ENCODE measurements at regions of chr20 and their contacts with region 1.

Region 1: GRCh38 chr20:51624157-51624731 is 81.7 kb upstream of the NFATC2 start:
- DNase-seq: peak; percentile 42
- H3K4me3 ChIP-seq: no peak overlapping the region
- H3K27ac ChIP-seq: no peak overlapping the region
- H3K4me1 ChIP-seq: no peaks in the 10 kb centered on the region
- H3K27me3 ChIP-seq: peaks cover 2% of the 10 kb centered on the region
- CTCF ChIP-seq: peak; percentile 50 to 70

Region 2: DNA sequence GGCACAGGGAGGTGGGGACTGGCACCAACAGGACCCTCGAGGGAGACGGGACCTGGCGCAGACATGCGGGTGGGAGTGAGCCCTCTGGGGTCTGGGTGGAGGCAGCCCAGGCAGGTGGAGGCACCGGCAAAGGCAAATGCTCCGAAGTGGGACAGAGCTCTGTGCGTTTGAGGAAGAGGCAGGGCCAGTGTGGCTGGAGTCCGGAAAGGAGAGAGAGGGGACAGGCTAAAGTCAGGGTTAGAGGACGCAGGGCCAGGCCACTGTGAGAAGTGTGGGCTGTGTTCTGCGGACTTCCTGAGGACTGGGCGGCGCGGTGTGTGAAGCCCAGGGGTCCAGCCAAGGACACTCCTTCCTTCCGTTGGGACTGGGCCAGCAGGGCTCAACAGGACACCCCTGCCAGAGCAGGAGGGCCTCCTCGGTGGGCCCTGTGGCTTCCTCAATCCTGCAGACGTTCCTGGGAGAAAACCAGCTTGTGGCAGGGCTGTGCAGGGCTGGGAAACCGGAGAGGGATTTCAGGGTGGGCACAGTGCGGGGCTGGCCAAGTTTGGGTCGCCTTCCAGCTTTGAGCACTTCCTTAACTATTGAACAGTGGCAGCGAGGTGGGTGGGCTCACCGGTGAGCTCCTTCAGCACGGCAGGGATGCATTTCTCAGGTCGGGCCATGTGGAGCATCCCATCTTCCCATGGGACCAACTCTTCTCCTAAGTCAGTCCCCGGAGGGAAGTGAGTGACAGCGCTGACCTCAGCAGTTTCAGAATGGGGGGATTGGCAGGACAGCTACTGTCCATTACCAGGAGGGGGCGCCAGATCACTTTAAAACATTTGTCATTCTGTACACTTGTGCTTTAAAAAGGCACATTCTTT is 643.2 kb before region 1 on chr20:
- CTCF ChIA-PET with region 1: no interaction called
- dilution Hi-C with region 1: no loop called
- in situ Hi-C with region 1: loop called in 1 of 2 experiments (anchors 10 kb)
- intact Hi-C with region 1: loop called (anchors 1 kb)
- DNase-seq: peak; percentile 52
- H3K4me3 ChIP-seq: no peak overlapping the region
- H3K27ac ChIP-seq: peak overlapping the region; percentile 84
- H3K4me1 ChIP-seq: peaks cover 34% of the 10 kb centered on the region
- H3K27me3 ChIP-seq: no peaks in the 10 kb centered on the region
- CTCF ChIP-seq: peak; percentile 70 to 91

Region 3: GRCh38 chr20:50992733-50993457 is 631.3 kb before region 1 on chr20:
- CTCF ChIA-PET with region 1: interaction called, 13 read pairs
- dilution Hi-C with region 1: no loop called
- in situ Hi-C with region 1: loop called in 1 of 2 experiments (anchors 10 kb)
- intact Hi-C with region 1: no loop called
- DNase-seq: peak; percentile 79
- H3K4me3 ChIP-seq: no peak overlapping the region
- H3K27ac ChIP-seq: peak overlapping the region; percentile 60
- H3K4me1 ChIP-seq: peaks cover 29% of the 10 kb centered on the region
- H3K27me3 ChIP-seq: no peaks in the 10 kb centered on the region
- CTCF ChIP-seq: peak; percentile 79 to 81

Region 4: DNA sequence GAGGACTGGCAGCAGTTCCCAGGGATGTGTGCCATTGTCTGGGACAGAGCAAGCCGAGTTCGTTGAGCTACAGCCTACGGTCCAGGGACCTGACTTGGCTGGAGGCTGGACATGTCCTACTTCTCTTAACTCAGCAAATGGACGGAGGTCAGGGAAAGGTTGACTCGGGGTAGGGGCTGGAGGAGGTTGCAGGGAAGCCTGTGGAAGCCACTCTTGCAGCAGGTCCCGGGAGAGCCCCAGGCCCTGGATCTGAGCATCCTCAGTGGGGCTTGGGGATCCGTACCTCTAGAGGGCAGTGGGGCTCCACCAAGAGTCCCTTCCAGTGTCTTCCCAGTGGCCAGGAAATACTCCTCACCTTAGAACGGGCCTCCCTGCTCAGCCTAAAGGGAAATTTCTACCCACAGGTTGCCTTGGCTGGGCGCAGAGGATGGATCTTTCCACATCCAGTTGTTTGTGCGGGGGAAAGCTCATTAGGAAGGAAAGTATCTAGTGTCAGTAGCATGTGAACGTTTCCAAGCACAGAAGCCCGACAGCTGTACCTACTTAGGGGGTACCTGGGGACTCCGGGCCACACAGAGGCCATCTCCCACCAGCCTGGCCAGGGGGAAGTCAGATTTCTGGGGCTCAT is 252.0 kb before region 1 on chr20:
- CTCF ChIA-PET with region 1: interaction called, 4 read pairs
- dilution Hi-C with region 1: no loop called
- in situ Hi-C with region 1: loop called in 1 of 2 experiments (anchors 10 kb)
- intact Hi-C with region 1: loop called (anchors 1 kb)
- DNase-seq: peak; percentile 62
- H3K4me3 ChIP-seq: no peak overlapping the region
- H3K27ac ChIP-seq: no peak overlapping the region
- H3K4me1 ChIP-seq: peaks cover under 1% of the 10 kb centered on the region
- H3K27me3 ChIP-seq: no peaks in the 10 kb centered on the region
- CTCF ChIP-seq: peak; percentile 82 to 94

Region 5: GRCh38 chr20:51639206-51639832 is 15.1 kb after region 1 on chr20:
- CTCF ChIA-PET with region 1: no interaction called
- dilution Hi-C with region 1: no loop called
- in situ Hi-C with region 1: no loop called
- intact Hi-C with region 1: no loop called
- DNase-seq: peak; percentile 37
- H3K4me3 ChIP-seq: no peak overlapping the region
- H3K27ac ChIP-seq: no peak overlapping the region
- H3K4me1 ChIP-seq: no peaks in the 10 kb centered on the region
- H3K27me3 ChIP-seq: no peaks in the 10 kb centered on the region
- CTCF ChIP-seq: peak; percentile 75 to 80

Region 6: GRCh38 chr20:51930775-51931174 is 306.5 kb after region 1 on chr20:
- CTCF ChIA-PET with region 1: no interaction called
- dilution Hi-C with region 1: no loop called
- in situ Hi-C with region 1: no loop called
- intact Hi-C with region 1: no loop called
- DNase-seq: peak; percentile 27
- H3K4me3 ChIP-seq: no peak overlapping the region
- H3K27ac ChIP-seq: no peak overlapping the region
- H3K4me1 ChIP-seq: no peaks in the 10 kb centered on the region
- H3K27me3 ChIP-seq: no peaks in the 10 kb centered on the region
- CTCF ChIP-seq: no peak